ENCODE measurements at regions of chr14 and their contacts with region 1.

Region 1: GRCh38 chr14:68951042-68951914 is 27.8 kb downstream of the ACTN1 start:
- DNase-seq: peak; percentile 96 to 97
- H3K4me3 ChIP-seq: peak overlapping the region; percentile 32; the same call in 1 of the 2 replicates
- H3K27ac ChIP-seq: peak overlapping the region; percentile 77
- H3K4me1 ChIP-seq: peaks cover 60% of the 10 kb centered on the region
- H3K27me3 ChIP-seq: no peaks in the 10 kb centered on the region
- CTCF ChIP-seq: no peak

Region 2: GRCh38 chr14:68966872-68967301 is 15.6 kb after region 1 on chr14:
- CTCF ChIA-PET with region 1: no interaction called
- POLR2A ChIA-PET with region 1: interaction called, 6 read pairs
- intact Hi-C with region 1: loop called (anchors 1 kb)
- DNase-seq: peak in 1 of 2 experiments; percentile 67
- H3K4me3 ChIP-seq: no peak overlapping the region
- H3K27ac ChIP-seq: peak overlapping the region; percentile 18; the same call in 1 of the 2 replicates
- H3K4me1 ChIP-seq: peaks cover 52% of the 10 kb centered on the region
- H3K27me3 ChIP-seq: no peaks in the 10 kb centered on the region
- CTCF ChIP-seq: no peak

Measured in PC-9 (cell line).